GM12878 (cell line): ENCODE measurements at regions of chr7 and their contacts with region 1.

Region 1: GRCh38 chr7:77696198-77697028 is at the start of gene RSBN1L:
- DNase-seq: peak; percentile 93
- ATAC-seq: peak; percentile 95
- H3K4me3 ChIP-seq: peak within 1 kb of the TSS; percentile 100
- H3K27ac ChIP-seq: peak within 1 kb of the TSS; percentile 95
- H3K4me1 ChIP-seq: no peaks in the 10 kb centered on the region
- H3K27me3 ChIP-seq: no peaks in the 10 kb centered on the region
- CTCF ChIP-seq: peak; percentile 14 to 51 (median 37); a peak in 5 of 6 replicates
- EP300 ChIP-seq: no peak
- POLR2A ChIP-seq: peak; percentile 91
- RAD21 ChIP-seq: no peak
- polyA plus RNA-seq, gene RSBN1L: 4.6 to 6.9 TPM

Region 2: DNA sequence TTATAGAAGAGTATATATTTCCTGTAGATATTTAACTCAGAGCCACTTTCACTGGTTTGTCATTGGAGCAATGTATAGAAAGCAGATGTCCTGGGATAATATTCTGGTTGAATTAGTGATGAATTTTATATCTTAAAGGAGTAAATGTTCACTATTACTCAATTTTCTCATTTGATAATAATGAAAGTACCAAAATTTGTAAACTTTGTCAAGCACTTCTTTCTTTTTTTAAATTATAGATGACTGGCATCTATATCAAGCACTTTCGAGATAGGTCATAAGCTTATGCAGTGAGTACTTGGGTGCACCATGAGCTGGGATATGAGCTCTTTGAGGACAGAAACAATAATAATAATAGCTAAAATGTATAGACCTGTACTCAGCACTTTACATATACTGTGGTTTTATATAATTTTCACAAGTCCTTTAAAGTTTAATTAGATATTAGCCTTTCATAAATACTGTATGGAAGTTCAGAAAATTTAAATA is 11.1 kb after region 1 on chr7:
- CTCF ChIA-PET with region 1: interaction called, 15 read pairs
- POLR2A ChIA-PET with region 1: interaction called, 10 read pairs
- RAD21 ChIA-PET with region 1: no interaction called
- SMC1A ChIA-PET with region 1: interaction called, 6 read pairs
- in situ Hi-C with region 1: no loop called
- intact Hi-C with region 1: no loop called
- DNase-seq: no peak
- ATAC-seq: no peak
- H3K4me3 ChIP-seq: no peak overlapping the region
- H3K27ac ChIP-seq: no peak overlapping the region
- H3K4me1 ChIP-seq: peaks cover 5% of the 10 kb centered on the region
- H3K27me3 ChIP-seq: no peaks in the 10 kb centered on the region
- CTCF ChIP-seq: no peak
- EP300 ChIP-seq: no peak
- POLR2A ChIP-seq: no peak
- RAD21 ChIP-seq: no peak

Region 3: DNA sequence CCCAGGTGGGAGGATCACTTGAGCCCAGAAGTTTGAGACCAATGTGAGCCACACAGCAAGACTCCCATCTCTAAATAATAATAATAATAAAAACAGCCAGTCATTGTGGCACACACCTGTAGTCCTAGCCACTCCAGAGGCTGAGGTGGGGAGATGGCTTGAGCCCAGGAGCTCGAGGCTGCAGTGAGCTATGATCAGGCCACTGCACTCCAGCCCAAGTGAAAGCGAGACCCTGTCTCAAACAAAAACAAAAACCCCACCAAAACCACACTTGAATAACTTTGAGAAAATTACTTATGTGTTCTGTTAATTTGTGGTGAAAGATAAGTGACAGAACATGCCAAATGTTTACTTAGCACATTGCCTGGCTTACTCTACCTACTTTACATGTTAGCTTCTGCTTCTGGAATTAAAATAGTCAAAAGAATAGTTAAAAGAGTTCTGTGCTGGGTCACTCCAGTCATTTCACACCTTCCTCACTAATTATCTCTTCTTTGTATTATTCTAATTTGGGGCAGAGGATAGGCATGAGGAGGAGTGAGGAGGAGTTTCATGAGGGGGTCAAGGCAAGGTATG is 92.0 kb after region 1 on chr7:
- CTCF ChIA-PET with region 1: no interaction called
- POLR2A ChIA-PET with region 1: no interaction called
- RAD21 ChIA-PET with region 1: no interaction called
- SMC1A ChIA-PET with region 1: no interaction called
- in situ Hi-C with region 1: no loop called
- intact Hi-C with region 1: no loop called
- DNase-seq: no peak
- ATAC-seq: peak; percentile 60
- H3K4me3 ChIP-seq: no peak overlapping the region
- H3K27ac ChIP-seq: no peak overlapping the region
- H3K4me1 ChIP-seq: no peaks in the 10 kb centered on the region
- H3K27me3 ChIP-seq: no peaks in the 10 kb centered on the region
- CTCF ChIP-seq: no peak
- EP300 ChIP-seq: no peak
- POLR2A ChIP-seq: no peak
- RAD21 ChIP-seq: no peak

Region 4: DNA sequence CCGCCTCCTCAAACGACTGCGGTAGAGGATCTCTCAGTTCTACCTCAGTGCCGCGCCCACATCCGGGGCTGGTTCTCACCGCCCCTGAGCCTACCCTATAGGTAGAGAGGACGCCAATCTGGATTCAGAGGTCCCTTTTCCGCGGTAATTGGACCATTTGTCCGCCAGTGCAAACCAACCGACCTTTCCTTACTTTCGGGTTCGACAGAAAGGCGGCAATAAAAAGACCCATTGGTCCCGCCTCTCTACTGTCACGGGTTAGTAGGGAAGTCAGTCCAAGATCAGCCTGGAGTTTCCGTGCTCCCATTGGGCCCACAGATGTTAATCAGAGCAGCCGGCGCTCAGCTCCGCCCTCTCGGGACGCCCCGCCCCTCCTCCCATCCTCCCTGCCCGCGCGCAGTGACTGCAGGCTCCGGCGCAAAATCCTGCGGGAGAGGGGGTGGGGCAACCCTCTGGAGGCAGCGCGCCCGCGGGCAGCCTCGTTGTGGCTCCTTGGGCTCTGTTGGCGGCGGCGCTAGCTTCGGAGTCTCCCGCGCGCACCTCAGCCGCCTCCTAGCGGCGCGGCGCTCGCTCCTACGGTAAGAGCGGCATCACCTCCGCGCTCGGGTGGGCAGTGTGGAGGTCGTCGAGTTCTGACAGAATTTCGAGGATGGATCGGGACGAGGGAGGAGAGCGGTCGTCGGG is 102.1 kb after region 1 on chr7 and contains the starts of genes PHTF2 and TMEM60:
- CTCF ChIA-PET with region 1: interaction called, 3 read pairs
- POLR2A ChIA-PET with region 1: interaction called, 5 read pairs
- RAD21 ChIA-PET with region 1: interaction called, 3 read pairs
- SMC1A ChIA-PET with region 1: no interaction called
- in situ Hi-C with region 1: no loop called
- intact Hi-C with region 1: loop called (anchors 2 kb)
- DNase-seq: peak; percentile 99
- ATAC-seq: peak; percentile 92
- H3K4me3 ChIP-seq: peak within 1 kb of the TSS; percentile 94
- H3K27ac ChIP-seq: peak within 1 kb of the TSS; percentile 86
- H3K4me1 ChIP-seq: peaks cover 16% of the 10 kb centered on the region
- H3K27me3 ChIP-seq: no peaks in the 10 kb centered on the region
- CTCF ChIP-seq: peak; percentile 37 to 66 (median 50)
- EP300 ChIP-seq: 0 out of 4 replicates have a peak, but pooled peaks of 1 of the 2 experiments have one; percentile 0
- POLR2A ChIP-seq: peak; percentile 76
- RAD21 ChIP-seq: no peak
- polyA plus RNA-seq, gene PHTF2: 12.9 to 14.1 TPM
- polyA plus RNA-seq, gene TMEM60: 75.6 to 94.2 TPM

Region 5: GRCh38 chr7:78301407-78301806 is 605.0 kb after region 1 on chr7:
- CTCF ChIA-PET with region 1: no interaction called
- POLR2A ChIA-PET with region 1: interaction called, 10 read pairs
- RAD21 ChIA-PET with region 1: no interaction called
- SMC1A ChIA-PET with region 1: no interaction called
- in situ Hi-C with region 1: no loop called
- intact Hi-C with region 1: no loop called
- DNase-seq: no peak
- ATAC-seq: no peak
- H3K4me3 ChIP-seq: no peak overlapping the region
- H3K27ac ChIP-seq: no peak overlapping the region
- H3K4me1 ChIP-seq: no peaks in the 10 kb centered on the region
- H3K27me3 ChIP-seq: no peaks in the 10 kb centered on the region
- CTCF ChIP-seq: no peak
- EP300 ChIP-seq: no peak
- POLR2A ChIP-seq: no peak
- RAD21 ChIP-seq: no peak